Common myeloid progenitor, CD34-positive (primary cell): ENCODE measurements at regions of chr1 and their contacts with region 1.

Region 1: DNA sequence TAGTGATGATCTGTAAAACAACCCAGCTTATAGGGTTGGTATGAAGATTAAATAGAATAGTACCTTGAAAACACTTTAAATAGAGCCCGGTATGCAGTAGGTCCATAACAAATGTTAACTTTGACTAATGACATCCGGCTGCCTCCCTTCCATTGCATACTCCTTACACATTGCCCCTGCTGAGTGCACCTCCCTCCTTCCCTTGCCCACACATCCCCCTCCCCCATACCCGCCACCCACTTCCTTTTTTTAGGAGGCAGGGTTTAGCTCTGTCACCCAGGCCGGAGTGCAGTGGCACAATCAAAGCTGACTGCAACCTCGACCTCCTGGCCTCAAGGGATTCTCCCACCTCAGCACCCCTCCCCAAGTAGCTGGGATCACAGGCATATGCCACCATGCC is 24.4 kb upstream of the ZC3H12A start:
- DNase-seq: peak; percentile 80 to 92 (median 92)
- H3K4me3 ChIP-seq: peak overlapping the region in 4 of 7 experiments; percentile 13 to 45 (median 18)
- H3K27ac ChIP-seq: no peak overlapping the region
- H3K4me1 ChIP-seq: peaks cover 0 to 21% (median 18%) of the 10 kb centered on the region in 4 experiments
- H3K27me3 ChIP-seq: no peaks in the 10 kb centered on the region

Region 2: DNA sequence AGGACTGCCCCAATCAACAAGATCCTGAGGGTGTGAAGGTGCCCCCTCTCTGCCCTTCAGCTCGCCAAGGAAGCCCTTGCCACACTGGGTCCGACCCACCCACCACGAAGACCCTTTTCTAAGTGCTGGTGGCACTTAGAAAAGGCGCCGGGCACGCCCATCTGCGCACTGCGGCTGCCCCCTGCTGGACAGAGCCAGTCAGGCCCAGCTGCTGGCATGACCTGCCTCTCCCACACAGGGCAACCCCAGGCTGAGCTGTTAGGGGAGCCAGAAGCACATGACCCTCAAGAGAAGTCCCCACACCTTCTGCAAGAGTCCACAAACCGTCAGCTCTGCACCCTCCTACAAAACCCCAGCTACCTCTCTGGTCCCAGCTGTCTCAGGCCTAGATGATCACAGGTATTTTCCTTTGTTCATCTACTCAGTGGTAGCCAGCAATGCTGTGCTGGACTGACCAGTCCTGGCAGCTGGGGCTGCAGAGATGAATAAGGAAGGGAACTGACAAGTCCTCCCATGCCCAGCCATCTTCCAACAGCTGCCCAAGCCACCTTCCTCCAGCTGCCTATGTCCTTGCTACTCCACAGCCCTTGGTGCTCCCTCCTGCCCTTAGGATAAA is 15.5 kb before region 1 on chr1:
- CTCF ChIA-PET with region 1: interaction called, 16 read pairs
- POLR2A ChIA-PET with region 1: no interaction called
- DNase-seq: peak; percentile 49 to 71 (median 67)
- H3K4me3 ChIP-seq: no peak overlapping the region
- H3K27ac ChIP-seq: no peak overlapping the region
- H3K4me1 ChIP-seq: no peaks in the 10 kb centered on the region
- H3K27me3 ChIP-seq: peaks cover 2 to 13% (median 6%) of the 10 kb centered on the region in 5 experiments

Region 3: DNA sequence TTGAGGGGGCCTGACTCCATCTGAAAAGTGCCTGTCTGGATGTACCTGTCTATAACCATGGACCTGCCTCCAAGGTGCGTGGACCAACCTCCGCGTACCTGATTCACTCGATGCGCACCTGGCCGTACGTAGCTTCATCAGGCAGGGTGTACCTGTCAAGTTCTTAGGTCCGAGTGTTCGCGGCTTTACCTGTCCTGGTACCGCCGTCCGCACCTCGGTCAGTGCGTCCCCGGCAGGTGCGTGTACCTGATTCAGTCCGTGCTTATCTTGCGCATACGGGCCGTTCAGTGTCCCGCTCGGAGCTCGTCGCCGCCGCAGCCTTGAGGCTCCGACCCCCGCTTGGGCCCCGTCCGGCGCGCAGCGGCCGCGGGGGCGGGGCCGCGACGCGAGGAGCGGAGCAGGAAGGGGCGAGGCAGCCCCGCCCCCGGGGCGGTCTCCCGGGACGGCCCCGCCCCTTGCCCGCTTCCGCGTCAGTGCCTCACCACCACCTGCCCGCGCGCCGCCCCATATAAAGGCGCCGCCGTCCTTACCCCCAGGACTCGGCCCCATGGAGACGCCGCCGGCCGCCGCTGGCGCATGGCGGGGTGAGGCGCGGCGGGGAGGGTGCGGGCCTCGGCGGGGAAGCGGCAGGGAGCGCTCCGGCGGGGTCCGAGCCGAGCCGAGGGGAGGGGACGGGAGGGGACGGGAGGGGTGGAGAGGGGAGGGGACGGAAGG is 24.3 kb after region 1 on chr1 and contains the start of gene ZC3H12A:
- CTCF ChIA-PET with region 1: interaction called, 146 read pairs
- POLR2A ChIA-PET with region 1: interaction called, 4 read pairs
- DNase-seq: peak; percentile 89 to 93 (median 93)
- H3K4me3 ChIP-seq: peak within 1 kb of the TSS; percentile 52 to 92 (median 84)
- H3K27ac ChIP-seq: peak within 1 kb of the TSS; percentile 75 to 90
- H3K4me1 ChIP-seq: peaks cover 9 to 78% (median 76%) of the 10 kb centered on the region in 4 experiments
- H3K27me3 ChIP-seq: no peaks in the 10 kb centered on the region